Activated CD4-positive, alpha-beta T cell treated with anti-CD3 and anti-CD28 coated beads, Interleukin-2, amount 10 ng/mL, durations not matched to agents 24 days and 14 days (primary cell): ENCODE measurements at regions of chr6 and their contacts with region 1.

Region 1: GRCh38 chr6:109073344-109074132 is 21.1 kb downstream of the SESN1 start:
- DNase-seq: peak; percentile 88
- H3K4me3 Mint-ChIP-seq: no peak overlapping the region
- H3K27ac Mint-ChIP-seq: no peak overlapping the region
- H3K4me1 Mint-ChIP-seq: peaks cover 17% of the 10 kb centered on the region
- H3K27me3 Mint-ChIP-seq: peaks cover 10% of the 10 kb centered on the region

Region 2: GRCh38 chr6:108541838-108542759 is 531.4 kb before region 1 on chr6:
- intact Hi-C with region 1: loop called (anchors 1 kb)
- DNase-seq: peak; percentile 88
- H3K4me3 Mint-ChIP-seq: peak overlapping the region; percentile 22
- H3K27ac Mint-ChIP-seq: no peak overlapping the region
- H3K4me1 Mint-ChIP-seq: peaks cover 9% of the 10 kb centered on the region
- H3K27me3 Mint-ChIP-seq: peaks cover 45% of the 10 kb centered on the region

Region 3: DNA sequence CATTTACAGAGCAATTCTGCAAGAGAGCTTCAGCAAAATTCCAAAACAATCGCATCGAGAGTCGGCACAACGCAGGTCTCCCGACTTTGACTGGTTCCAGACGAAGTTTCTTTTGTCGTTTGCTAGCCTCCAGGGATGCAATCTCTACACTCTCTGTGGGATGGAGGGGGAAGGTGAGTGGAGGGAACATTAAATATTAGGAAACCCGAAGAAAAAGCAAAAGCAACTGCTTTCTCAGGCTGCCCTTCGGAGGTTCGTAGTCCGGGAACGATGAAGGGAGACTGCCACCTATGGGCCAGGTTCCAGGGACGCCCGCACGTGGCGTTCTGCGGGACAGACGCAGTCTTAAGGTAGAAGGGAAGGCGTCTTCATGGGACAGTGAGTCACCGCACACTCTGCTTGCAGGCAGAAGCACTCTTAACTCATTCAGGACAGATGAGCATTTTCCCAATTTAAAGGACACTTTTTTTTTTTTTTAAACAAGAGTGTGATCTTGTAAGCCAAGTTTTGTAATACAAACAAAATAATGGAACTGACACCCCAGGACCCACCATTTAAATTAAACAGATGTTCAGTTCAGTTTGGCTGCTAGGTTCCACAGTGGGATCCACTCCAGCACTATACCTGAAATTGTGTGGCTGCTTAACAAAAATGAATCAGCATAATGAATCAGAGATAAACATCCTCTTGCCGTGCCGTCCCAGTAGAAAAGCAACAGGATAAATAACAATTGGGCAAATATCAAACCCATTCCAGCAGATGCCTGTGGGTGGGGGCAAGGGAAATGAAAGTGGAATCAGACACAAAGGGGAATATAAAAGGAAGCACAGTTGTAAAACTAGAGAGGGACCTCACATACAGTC is 291.1 kb before region 1 on chr6:
- intact Hi-C with region 1: loop called (anchors 1 kb)
- DNase-seq: peak; percentile 93
- H3K4me3 Mint-ChIP-seq: peak overlapping the region; percentile 82
- H3K27ac Mint-ChIP-seq: no peak overlapping the region
- H3K4me1 Mint-ChIP-seq: peaks cover 11% of the 10 kb centered on the region
- H3K27me3 Mint-ChIP-seq: peaks cover 63% of the 10 kb centered on the region

Region 4: DNA sequence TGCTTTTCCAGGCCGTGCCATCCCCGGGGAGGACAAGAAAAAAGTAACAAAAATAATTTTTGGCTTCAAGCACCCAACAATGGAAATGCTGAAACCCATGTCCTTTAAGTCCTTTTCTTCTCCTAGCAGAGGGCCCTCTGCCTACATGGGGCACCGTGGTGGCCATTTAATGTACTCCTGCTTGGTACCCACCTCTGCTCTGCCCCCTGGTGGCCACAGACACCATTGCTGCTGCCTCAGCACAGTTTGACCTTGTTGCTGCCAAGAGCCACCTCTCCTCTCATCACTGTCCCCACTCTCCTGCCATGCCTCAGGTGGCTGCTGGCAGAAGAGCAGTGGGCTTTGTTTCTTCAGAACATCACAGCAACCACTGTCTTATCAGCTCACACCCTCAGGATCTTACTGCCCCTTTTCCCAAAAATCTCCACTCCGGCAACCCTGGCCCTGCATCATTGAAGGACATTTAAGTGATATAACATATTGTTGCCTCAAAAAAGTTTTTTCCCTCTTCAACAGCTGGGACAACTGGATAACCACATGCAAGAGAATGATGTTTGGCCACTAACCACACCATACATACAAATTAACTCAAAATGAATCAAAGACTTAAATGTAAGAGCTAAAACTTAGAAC is 238.2 kb before region 1 on chr6:
- intact Hi-C with region 1: loop called (anchors 2 kb)
- DNase-seq: peak; percentile 94
- H3K4me3 Mint-ChIP-seq: no peak overlapping the region
- H3K27ac Mint-ChIP-seq: peak overlapping the region; percentile 14
- H3K4me1 Mint-ChIP-seq: peaks cover 26% of the 10 kb centered on the region
- H3K27me3 Mint-ChIP-seq: peaks cover 18% of the 10 kb centered on the region

Region 5: GRCh38 chr6:108921547-108922361 is 151.8 kb before region 1 on chr6:
- intact Hi-C with region 1: loop called (anchors 5 kb)
- DNase-seq: peak; percentile 68
- H3K4me3 Mint-ChIP-seq: no peak overlapping the region
- H3K27ac Mint-ChIP-seq: peak overlapping the region; percentile 18
- H3K4me1 Mint-ChIP-seq: peaks cover 24% of the 10 kb centered on the region
- H3K27me3 Mint-ChIP-seq: peaks cover 40% of the 10 kb centered on the region

Region 6: DNA sequence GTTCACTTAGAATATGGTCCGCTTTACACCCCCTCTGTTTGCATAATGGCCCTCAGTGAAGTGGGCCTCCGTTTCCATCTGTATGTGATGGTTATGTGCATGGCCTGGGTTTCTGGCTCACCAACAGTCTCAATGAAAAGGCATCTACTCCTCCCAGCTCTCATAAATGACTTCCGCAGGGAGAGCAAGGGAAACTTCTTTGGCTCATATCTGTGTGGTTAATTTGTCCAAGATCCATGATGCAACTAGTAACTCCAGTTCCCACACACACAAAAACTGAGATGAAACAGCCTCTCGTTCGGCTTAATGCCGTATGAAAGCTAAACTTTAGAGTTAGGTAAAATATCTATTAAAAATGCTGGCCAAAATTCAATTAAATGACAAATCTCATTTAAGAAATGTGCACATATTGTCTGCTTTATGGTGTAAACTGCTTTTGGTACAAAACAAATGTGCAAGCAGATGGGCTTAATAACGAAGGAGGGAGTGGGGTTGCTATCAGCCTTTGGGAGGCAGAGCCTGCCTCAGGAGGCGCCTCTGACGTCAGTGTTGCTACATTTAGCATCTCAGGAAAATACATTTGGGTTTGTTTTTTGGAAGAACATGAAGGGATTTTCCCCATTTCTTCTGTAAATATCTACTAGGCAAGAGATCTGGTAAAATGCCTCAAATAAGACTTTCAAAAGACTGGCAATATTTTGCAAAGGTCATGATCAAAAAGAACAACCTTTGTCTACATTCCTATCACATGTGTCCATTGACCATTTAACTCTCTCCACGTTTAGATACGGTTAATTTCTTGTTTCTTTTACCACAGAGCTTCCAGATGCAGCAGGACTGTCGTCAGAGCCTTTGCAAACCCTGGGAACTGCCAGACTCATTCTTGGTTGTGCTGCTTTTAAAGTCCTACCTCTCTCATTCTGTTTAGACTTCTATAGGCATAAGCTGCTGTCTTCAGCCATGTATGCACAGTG is 128.5 kb before region 1 on chr6:
- intact Hi-C with region 1: loop called (anchors 1 kb)
- DNase-seq: no peak
- H3K4me3 Mint-ChIP-seq: peak overlapping the region; percentile 27
- H3K27ac Mint-ChIP-seq: peak overlapping the region; percentile 34
- H3K4me1 Mint-ChIP-seq: peaks cover 57% of the 10 kb centered on the region
- H3K27me3 Mint-ChIP-seq: no peaks in the 10 kb centered on the region

Region 7: DNA sequence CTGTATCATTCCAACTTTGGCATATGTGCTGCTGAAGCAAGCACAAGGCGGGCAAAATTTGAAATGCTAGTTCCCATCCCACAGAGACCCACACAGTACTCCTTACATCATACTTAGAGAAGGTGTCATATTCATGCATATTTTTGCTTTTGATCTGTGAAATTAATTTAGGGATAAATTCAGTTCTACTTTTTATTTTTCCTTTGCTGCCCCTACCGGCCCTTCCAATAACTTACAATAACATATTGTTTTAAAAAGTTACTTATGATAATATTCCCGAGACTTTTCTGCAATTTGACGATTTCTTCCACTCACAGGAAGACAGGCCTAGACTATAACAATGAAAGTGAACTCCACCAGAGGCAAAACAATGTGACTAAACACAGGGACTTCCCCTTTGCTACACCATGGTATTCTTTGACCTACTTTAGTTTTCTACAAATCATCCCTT is 13.9 kb before region 1 on chr6:
- intact Hi-C with region 1: no loop called
- DNase-seq: peak; percentile 64
- H3K4me3 Mint-ChIP-seq: no peak overlapping the region
- H3K27ac Mint-ChIP-seq: peak overlapping the region; percentile 5
- H3K4me1 Mint-ChIP-seq: peaks cover 9% of the 10 kb centered on the region
- H3K27me3 Mint-ChIP-seq: peaks cover 8% of the 10 kb centered on the region